A549 (cell line): ENCODE measurements at regions of chr7 and their contacts with region 1.

Region 1: GRCh38 chr7:129367700-129368388 is 66.4 kb upstream of the STRIP2 start:
- DNase-seq: peak; percentile 69 to 76
- ATAC-seq: peak; percentile 96
- H3K4me3 ChIP-seq: no peak overlapping the region
- H3K27ac ChIP-seq: peak overlapping the region in 1 of 2 experiments; percentile 44; a peak in 3 of 6 replicates
- H3K4me1 ChIP-seq: 0 out of 3 replicates have a peak, but pooled peaks cover 6% of the 10 kb centered on the region
- CTCF ChIP-seq: peak; percentile 91
- EP300 ChIP-seq: peak in 1 of 2 experiments; percentile 54; a peak in 1 of 5 replicates
- POLR2A ChIP-seq: no peak
- RAD21 ChIP-seq: peak; percentile 84 to 86

Region 2: GRCh38 chr7:129134356-129134987 is 233.4 kb before region 1 on chr7:
- CTCF ChIA-PET with region 1: no interaction called
- POLR2A ChIA-PET with region 1: no interaction called
- DNase-seq: no peak
- ATAC-seq: no peak; a peak in 1 of 6 replicates
- H3K4me3 ChIP-seq: no peak overlapping the region
- H3K27ac ChIP-seq: no peak overlapping the region
- H3K4me1 ChIP-seq: no peaks in the 10 kb centered on the region
- CTCF ChIP-seq: no peak
- EP300 ChIP-seq: no peak
- POLR2A ChIP-seq: no peak
- RAD21 ChIP-seq: no peak

Region 3: GRCh38 chr7:129343099-129343700 is 24.6 kb before region 1 on chr7:
- CTCF ChIA-PET with region 1: interaction called, 24 read pairs
- POLR2A ChIA-PET with region 1: interaction called, 4 read pairs
- DNase-seq: peak; percentile 36 to 57
- ATAC-seq: peak; percentile 62 to 81; a peak in 3 of 6 replicates
- H3K4me3 ChIP-seq: no peak overlapping the region
- H3K27ac ChIP-seq: no peak overlapping the region
- H3K4me1 ChIP-seq: no peaks in the 10 kb centered on the region
- CTCF ChIP-seq: peak; percentile 79
- EP300 ChIP-seq: no peak
- POLR2A ChIP-seq: no peak
- RAD21 ChIP-seq: peak; percentile 64 to 66; a peak in 4 of 5 replicates

Region 4: DNA sequence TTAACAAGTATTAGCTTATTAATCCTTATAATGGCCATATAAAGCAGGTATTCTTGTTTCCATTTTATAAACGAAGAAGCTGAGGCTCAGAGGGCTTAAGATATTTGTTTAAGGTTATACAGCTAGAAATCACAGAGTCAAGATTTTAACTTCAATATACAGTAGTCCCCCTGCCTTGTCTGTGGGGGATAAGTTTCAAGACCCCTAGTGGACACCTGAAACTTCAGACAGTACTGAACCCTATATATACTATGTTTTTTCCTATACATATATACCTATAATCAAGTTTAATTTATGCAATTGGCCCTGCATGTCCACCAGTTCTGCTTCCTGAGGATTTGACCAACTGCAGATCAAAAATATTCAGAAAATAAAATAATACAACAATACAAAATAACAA is 22.0 kb after region 1 on chr7:
- CTCF ChIA-PET with region 1: interaction called, 16 read pairs
- POLR2A ChIA-PET with region 1: no interaction called
- DNase-seq: no peak
- ATAC-seq: no peak
- H3K4me3 ChIP-seq: no peak overlapping the region
- H3K27ac ChIP-seq: no peak overlapping the region
- H3K4me1 ChIP-seq: no peaks in the 10 kb centered on the region
- CTCF ChIP-seq: no peak
- EP300 ChIP-seq: no peak
- POLR2A ChIP-seq: no peak
- RAD21 ChIP-seq: no peak

Region 5: DNA sequence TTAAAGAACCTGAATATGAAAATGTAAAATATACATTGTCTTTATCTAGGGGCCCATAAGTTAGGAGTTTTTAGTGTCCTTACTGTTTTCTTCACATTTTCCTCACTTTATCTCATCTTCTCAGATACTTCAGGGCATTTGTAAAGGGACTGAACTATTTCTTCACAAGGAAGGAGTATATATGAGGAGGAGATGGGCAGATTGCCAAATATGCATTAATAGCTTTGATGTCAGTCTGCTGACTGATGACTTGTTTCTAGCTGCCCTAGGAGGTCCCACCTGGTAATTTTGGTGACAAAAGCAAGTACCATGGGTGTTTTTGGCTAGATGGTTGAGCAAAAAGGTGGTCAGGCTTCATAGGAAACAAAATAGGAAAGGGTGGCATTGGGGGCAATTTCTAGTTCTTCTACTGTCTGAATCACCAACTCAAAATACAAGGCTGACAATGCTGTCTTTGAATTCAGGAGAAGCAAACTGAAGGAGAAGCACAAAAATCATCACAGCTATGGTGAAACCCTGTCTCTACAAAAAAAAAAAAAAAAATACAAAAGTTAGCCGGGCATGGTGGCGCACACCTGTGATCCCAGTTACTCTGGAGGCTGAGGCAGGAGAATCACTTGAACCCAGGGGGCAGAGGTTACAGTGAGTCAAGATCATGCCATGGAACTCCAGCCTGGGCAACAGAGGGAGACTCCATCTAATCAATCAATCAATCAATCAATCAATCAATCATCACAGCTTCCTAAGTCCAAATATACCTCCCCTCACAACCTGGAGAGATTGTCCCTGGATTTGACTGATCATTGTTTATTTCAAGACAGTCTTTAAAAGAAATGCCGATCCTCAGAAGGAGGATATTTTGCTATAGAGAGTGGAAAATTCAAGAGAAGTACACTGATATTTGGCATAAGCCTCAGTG is 56.1 kb after region 1 on chr7:
- CTCF ChIA-PET with region 1: interaction called, 13 read pairs
- POLR2A ChIA-PET with region 1: no interaction called
- DNase-seq: peak in 1 of 2 experiments; percentile 11
- ATAC-seq: no peak
- H3K4me3 ChIP-seq: no peak overlapping the region
- H3K27ac ChIP-seq: no peak overlapping the region
- H3K4me1 ChIP-seq: 0 out of 3 replicates have a peak, but pooled peaks cover 3% of the 10 kb centered on the region
- CTCF ChIP-seq: no peak
- EP300 ChIP-seq: no peak
- POLR2A ChIP-seq: no peak
- RAD21 ChIP-seq: no peak

Region 6: DNA sequence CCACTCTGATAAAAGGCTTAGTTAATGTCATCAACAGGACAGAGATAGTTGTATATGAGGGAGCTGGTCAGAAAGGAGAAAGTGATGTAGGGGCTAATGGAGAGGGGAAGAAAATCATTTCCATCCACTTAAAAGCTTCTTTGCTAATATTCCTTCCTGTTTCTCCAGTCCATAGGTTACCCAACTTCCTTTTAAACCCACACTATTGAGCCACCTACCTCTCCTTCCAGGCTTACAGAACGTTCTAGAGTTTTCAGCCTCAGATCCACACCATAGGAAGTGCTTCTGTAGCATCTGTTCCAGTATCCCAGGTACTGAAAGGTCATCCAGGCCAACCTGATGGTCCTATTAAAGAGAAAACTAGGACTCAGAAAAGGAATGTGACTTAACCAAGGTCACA is 94.6 kb after region 1 on chr7:
- CTCF ChIA-PET with region 1: interaction called, 18 read pairs
- POLR2A ChIA-PET with region 1: no interaction called
- DNase-seq: no peak
- ATAC-seq: no peak
- H3K4me3 ChIP-seq: no peak overlapping the region
- H3K27ac ChIP-seq: no peak overlapping the region
- H3K4me1 ChIP-seq: no peaks in the 10 kb centered on the region
- CTCF ChIP-seq: no peak
- EP300 ChIP-seq: no peak
- POLR2A ChIP-seq: no peak
- RAD21 ChIP-seq: no peak

Region 7: GRCh38 chr7:129480674-129481365 is 113.0 kb after region 1 on chr7:
- CTCF ChIA-PET with region 1: interaction called, 20 read pairs
- POLR2A ChIA-PET with region 1: no interaction called
- DNase-seq: no peak
- ATAC-seq: no peak
- H3K4me3 ChIP-seq: no peak overlapping the region
- H3K27ac ChIP-seq: no peak overlapping the region
- H3K4me1 ChIP-seq: no peaks in the 10 kb centered on the region
- CTCF ChIP-seq: no peak
- EP300 ChIP-seq: no peak
- POLR2A ChIP-seq: no peak
- RAD21 ChIP-seq: no peak

Region 8: GRCh38 chr7:130021105-130021834 is 653.4 kb after region 1 on chr7:
- CTCF ChIA-PET with region 1: no interaction called
- POLR2A ChIA-PET with region 1: no interaction called
- DNase-seq: no peak
- ATAC-seq: no peak
- H3K4me3 ChIP-seq: no peak overlapping the region
- H3K27ac ChIP-seq: no peak overlapping the region
- H3K4me1 ChIP-seq: peaks cover 13% of the 10 kb centered on the region
- CTCF ChIP-seq: no peak
- EP300 ChIP-seq: no peak
- POLR2A ChIP-seq: no peak
- RAD21 ChIP-seq: no peak